CD4-positive, alpha-beta T cell (primary cell): ENCODE measurements at regions of chr10 and their contacts with region 1.

Region 1: GRCh38 chr10:71756311-71757191 is 16.8 kb downstream of the VSIR start:
- DNase-seq: peak in 4 of 14 experiments; percentile 41 to 75 (median 72)
- ATAC-seq: peak; percentile 82
- H3K4me3 ChIP-seq: peak overlapping the region; percentile 18
- H3K4me3 Mint-ChIP-seq: peak overlapping the region; percentile 66
- H3K27ac ChIP-seq: peak overlapping the region; percentile 86 to 87
- H3K27ac Mint-ChIP-seq: peak overlapping the region; percentile 93
- H3K4me1 ChIP-seq: peaks cover 94% of the 10 kb centered on the region
- H3K4me1 Mint-ChIP-seq: peaks cover 88% of the 10 kb centered on the region
- H3K27me3 ChIP-seq: no peaks in the 10 kb centered on the region
- H3K27me3 Mint-ChIP-seq: no peaks in the 10 kb centered on the region
- CTCF ChIP-seq: no peak

Region 2: DNA sequence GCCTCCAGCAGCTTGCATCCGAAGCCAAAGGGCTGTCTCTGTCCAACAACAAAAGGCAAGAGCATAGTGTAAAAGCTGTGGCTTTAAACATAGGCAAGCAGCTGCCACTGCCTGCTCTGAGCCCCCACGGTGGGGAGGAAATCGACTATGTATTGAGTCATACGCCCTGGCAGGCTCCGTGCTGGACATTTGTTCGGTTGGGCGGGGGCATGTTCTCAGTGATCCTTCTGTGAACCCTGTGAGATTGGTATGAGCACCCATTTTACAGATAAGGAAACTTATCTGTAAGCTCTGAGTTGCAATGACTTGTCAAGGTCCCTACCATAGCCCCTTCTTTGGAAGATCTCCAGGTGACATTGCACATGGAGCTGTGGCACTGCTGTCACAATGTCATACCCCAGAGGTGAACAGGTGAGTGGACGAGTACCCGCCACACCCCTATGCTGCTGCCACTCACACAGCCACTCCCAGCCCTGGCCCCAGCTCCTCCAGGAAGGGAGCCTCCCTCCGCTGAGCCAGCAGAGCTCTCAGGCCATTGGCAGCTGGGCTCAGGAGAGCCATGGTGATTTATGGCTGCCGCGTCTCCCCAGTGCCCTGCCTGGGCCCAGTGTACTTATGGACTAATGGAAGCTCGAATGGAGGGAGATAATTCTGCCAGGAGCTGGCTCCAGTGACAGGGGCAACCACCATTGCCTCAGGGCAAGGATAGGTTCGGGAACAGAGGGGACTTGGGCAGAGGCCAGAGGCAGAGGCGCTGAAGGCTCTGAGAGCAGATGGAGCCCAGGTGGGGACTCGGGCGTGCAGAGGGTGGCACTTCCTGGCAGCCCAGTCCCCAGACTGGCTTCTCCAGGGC is 500.5 kb before region 1 on chr10:
- CTCF ChIA-PET with region 1: no interaction called
- POLR2A ChIA-PET with region 1: no interaction called
- intact Hi-C with region 1: no loop called
- DNase-seq: no peak
- ATAC-seq: no peak
- H3K4me3 ChIP-seq: no peak overlapping the region
- H3K4me3 Mint-ChIP-seq: no peak overlapping the region
- H3K27ac ChIP-seq: no peak overlapping the region
- H3K27ac Mint-ChIP-seq: no peak overlapping the region
- H3K4me1 ChIP-seq: no peaks in the 10 kb centered on the region
- H3K4me1 Mint-ChIP-seq: no peaks in the 10 kb centered on the region
- H3K27me3 ChIP-seq: peaks cover 0 to 2% of the 10 kb centered on the region in 2 experiments
- H3K27me3 Mint-ChIP-seq: no peaks in the 10 kb centered on the region
- CTCF ChIP-seq: no peak

Region 3: DNA sequence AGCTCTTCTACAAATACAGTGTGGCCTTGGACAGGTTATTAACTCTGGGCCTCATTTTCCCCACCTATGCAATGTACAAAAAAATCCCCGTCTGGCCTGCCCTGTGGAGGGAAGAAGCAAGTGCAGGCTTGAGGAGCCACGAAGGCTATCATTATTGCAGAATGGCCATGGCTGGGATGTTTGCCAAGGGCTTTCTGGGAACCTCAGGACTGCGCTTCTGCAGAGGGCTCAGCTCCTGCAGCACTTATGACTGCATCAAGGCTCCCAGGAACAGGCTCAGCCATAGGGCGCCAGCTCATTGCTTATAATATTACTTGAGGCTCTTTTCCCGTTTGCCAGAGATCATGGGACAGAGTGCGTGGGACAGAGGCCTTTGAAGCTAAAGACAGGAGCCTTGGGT is 16.5 kb before region 1 on chr10:
- CTCF ChIA-PET with region 1: interaction called, 6 read pairs
- POLR2A ChIA-PET with region 1: interaction called, 416 read pairs
- intact Hi-C with region 1: no loop called
- DNase-seq: no peak
- ATAC-seq: no peak
- H3K4me3 ChIP-seq: no peak overlapping the region
- H3K4me3 Mint-ChIP-seq: peak overlapping the region; percentile 77
- H3K27ac ChIP-seq: peak overlapping the region; percentile 42 to 51
- H3K27ac Mint-ChIP-seq: peak overlapping the region; percentile 96
- H3K4me1 ChIP-seq: peaks cover 100% of the 10 kb centered on the region
- H3K4me1 Mint-ChIP-seq: peaks cover 100% of the 10 kb centered on the region
- H3K27me3 ChIP-seq: no peaks in the 10 kb centered on the region
- H3K27me3 Mint-ChIP-seq: no peaks in the 10 kb centered on the region
- CTCF ChIP-seq: no peak

Region 4: DNA sequence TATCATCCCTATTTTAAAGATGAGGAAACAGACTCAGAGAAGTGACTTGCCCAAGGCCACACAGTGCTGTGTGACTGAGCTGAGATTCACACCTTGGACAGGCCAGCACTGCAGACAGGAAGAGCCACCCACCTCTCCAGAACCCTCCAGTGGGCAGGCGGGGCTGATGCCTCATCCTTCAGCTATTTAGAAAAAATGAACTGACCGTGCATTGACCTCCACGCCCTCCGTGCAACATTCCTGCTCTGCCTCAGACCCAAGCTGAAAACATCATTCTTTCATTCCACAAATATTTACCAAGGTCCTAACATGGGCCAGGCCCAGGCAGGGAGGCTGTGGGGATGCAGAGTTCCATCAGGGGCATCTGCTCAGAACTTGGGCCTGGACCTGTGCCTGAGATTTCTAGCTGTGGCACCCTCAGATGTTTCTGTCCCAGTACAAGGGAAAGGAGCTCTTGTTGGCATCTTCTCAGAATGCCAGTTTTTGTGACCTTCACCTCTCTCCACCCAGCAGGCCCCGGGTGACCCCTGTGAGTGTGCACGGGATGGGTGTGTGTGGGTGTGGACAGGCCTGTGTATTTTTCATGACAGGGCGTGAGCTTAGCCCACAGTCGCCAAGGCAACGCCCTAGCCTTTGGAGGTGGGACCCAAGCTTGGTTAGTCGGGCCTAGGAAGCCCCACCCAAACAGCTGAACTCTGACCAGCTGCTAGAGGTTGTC is 10.3 kb after region 1 on chr10:
- CTCF ChIA-PET with region 1: interaction called, 35 read pairs
- POLR2A ChIA-PET with region 1: interaction called, 416 read pairs
- intact Hi-C with region 1: loop called in 1 of 2 experiments (anchors 1 kb)
- DNase-seq: peak in 3 of 14 experiments; percentile 30 to 63 (median 56)
- ATAC-seq: no peak
- H3K4me3 ChIP-seq: peak overlapping the region; percentile 1
- H3K4me3 Mint-ChIP-seq: peak overlapping the region; percentile 70
- H3K27ac ChIP-seq: peak overlapping the region; percentile 71 to 74
- H3K27ac Mint-ChIP-seq: peak overlapping the region; percentile 95
- H3K4me1 ChIP-seq: peaks cover 94% of the 10 kb centered on the region
- H3K4me1 Mint-ChIP-seq: peaks cover 98% of the 10 kb centered on the region
- H3K27me3 ChIP-seq: no peaks in the 10 kb centered on the region
- H3K27me3 Mint-ChIP-seq: no peaks in the 10 kb centered on the region
- CTCF ChIP-seq: no peak